IMR-90 (cell line): ENCODE measurements at regions of chr4 and their contacts with region 1.

Region 1: DNA sequence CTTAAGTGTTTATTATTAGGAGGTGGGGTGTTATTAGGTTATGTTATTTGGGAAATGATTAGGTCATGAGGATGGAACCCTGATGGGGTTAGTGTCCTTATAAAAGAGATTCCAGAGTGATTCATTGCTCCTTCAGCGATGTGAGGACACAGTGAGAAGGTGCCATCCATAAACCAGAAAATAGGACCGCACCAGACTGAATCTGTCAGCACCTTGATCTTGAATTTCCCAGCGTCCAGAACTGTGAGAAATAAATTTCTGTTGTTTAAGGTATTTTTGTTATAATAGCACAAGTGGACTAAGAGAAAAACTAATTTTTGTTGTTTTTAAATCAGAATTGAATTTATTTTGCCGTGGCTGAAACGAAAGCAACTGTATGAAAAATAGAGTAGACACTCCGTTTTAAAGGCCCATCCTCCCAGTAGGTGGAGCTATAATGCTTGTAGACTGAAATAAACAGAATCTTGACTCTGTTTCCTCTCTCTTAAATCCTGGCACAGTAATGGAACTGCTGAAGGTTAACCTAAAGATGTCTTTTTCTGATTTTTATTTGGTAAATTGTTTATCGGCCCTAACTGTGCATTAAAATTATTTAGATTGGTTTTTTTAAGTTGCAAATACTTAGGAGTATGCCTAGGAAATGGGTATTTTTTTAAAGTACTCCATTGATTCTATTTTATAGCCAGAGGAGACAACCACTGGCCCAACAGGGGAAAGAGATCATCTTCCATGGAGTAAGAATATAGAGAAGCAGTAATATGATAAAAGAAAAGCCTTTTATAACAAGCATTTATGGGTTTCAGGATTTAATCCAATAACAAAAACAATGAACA is 133.2 kb upstream of the ADAMTS3 start:
- DNase-seq: peak; percentile 49
- ATAC-seq: peak; percentile 87
- H3K4me3 ChIP-seq: peak overlapping the region; percentile 45
- H3K27ac ChIP-seq: no peak overlapping the region
- H3K4me1 ChIP-seq: no peaks in the 10 kb centered on the region
- H3K27me3 ChIP-seq: no peaks in the 10 kb centered on the region
- CTCF ChIP-seq: peak; percentile 72
- POLR2A ChIP-seq: no peak
- RAD21 ChIP-seq: peak; percentile 62

Region 2: DNA sequence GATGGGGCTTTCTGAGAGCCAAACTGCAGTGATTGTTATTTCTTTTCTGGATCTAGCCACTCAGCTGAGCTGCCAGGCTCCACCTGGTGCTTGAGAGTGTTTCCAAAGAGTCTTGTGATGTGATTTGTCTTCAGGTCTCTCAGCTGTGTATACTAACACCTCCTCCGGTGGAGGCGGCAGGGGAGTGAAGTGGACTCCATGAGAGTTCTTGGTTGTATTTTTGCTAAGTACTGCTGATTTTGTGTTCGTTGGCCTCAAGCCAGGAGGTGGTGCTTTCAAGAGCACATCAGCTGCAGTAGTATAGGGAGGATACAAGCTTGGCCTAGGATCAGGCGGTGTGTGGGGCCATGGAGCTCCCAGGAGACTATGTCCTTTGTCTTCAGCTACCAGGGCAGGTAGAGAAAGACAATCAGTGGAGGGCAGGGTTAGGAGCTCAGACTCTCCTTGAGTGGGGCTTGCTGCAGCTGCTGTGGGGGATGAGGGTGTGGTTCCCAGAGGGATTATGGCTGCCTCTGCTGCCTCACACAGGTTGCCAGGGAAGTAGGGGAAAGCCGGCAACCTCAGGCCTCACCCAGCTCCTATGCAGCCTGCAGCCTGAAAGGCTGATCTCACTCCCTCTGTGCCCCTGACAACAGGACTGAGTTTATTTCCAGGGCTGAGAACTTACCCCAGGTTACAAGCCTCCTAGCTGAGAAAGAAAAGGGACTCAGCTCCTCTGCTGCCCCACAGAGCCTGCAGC is 608.0 kb before region 1 on chr4:
- CTCF ChIA-PET with region 1: no interaction called
- POLR2A ChIA-PET with region 1: no interaction called
- dilution Hi-C with region 1: no loop called
- in situ Hi-C with region 1: no loop called
- intact Hi-C with region 1: no loop called
- DNase-seq: no peak
- ATAC-seq: no peak
- H3K4me3 ChIP-seq: no peak overlapping the region
- H3K27ac ChIP-seq: no peak overlapping the region
- H3K4me1 ChIP-seq: no peaks in the 10 kb centered on the region
- H3K27me3 ChIP-seq: no peaks in the 10 kb centered on the region
- CTCF ChIP-seq: no peak
- POLR2A ChIP-seq: no peak
- RAD21 ChIP-seq: no peak

Region 3: DNA sequence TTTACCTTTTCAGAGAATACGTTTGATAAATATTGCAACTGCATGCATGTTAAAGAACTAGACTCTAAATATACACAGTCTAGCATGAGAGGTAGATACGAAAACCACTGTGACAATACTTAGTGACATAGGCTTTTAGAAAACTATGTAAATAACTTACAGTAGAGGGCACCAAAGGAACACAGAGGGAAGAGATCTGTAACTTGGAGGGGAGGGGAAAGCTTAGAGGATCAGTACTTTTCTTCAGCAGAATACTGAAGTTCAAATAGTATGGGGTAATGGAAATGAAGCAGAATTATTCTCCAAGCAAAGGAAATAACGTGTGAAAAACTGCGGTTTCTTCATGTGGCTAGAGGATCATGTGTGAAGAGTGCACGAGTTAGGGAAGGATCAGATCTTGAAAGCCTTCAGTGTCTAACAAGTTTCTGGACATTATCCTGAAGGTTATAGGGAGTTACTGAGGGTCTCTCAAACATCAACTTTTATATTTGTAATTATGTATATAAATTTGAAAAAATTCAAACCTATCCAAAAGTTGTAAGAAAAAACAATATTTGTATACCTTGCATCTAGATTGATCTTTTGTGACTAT is 406.1 kb before region 1 on chr4:
- CTCF ChIA-PET with region 1: no interaction called
- POLR2A ChIA-PET with region 1: no interaction called
- dilution Hi-C with region 1: no loop called
- in situ Hi-C with region 1: no loop called
- intact Hi-C with region 1: loop called (anchors 2 kb)
- DNase-seq: peak; percentile 57
- ATAC-seq: peak; percentile 98
- H3K4me3 ChIP-seq: no peak overlapping the region
- H3K27ac ChIP-seq: no peak overlapping the region
- H3K4me1 ChIP-seq: no peaks in the 10 kb centered on the region
- H3K27me3 ChIP-seq: no peaks in the 10 kb centered on the region
- CTCF ChIP-seq: peak; percentile 75
- POLR2A ChIP-seq: no peak
- RAD21 ChIP-seq: peak; percentile 78

Region 4: GRCh38 chr4:72505314-72505744 is 196.9 kb before region 1 on chr4:
- CTCF ChIA-PET with region 1: interaction called, 3 read pairs
- POLR2A ChIA-PET with region 1: no interaction called
- dilution Hi-C with region 1: no loop called
- in situ Hi-C with region 1: no loop called
- intact Hi-C with region 1: loop called (anchors 2 kb)
- DNase-seq: peak; percentile 58
- ATAC-seq: peak; percentile 98
- H3K4me3 ChIP-seq: no peak overlapping the region
- H3K27ac ChIP-seq: no peak overlapping the region
- H3K4me1 ChIP-seq: no peaks in the 10 kb centered on the region
- H3K27me3 ChIP-seq: no peaks in the 10 kb centered on the region; the same call in 1 of the 2 replicates
- CTCF ChIP-seq: peak; percentile 78
- POLR2A ChIP-seq: no peak
- RAD21 ChIP-seq: peak; percentile 79

Region 5: DNA sequence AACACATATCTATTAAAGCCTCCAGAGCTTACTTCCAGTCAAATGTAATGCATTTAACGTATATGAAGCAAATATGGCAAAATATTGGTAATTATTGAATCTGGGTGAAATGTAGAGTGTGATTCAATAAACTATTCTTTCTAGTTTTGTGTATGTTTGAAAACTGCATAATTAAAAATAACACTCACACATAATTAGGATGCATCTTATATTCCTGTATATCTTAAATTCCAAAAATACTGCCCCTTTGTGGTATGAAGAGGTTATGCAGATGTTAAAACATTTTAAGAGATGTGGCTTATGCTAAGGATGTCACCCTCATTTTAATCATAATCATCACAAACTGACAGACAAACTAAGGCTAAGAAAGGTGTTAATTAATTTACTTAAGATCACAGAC is 184.4 kb after region 1 on chr4:
- CTCF ChIA-PET with region 1: no interaction called
- POLR2A ChIA-PET with region 1: no interaction called
- dilution Hi-C with region 1: no loop called
- in situ Hi-C with region 1: no loop called
- intact Hi-C with region 1: loop called (anchors 5 kb)
- DNase-seq: no peak
- ATAC-seq: 0 out of 2 replicates have a peak, but pooled peaks have one; percentile 40
- H3K4me3 ChIP-seq: no peak overlapping the region
- H3K27ac ChIP-seq: no peak overlapping the region
- H3K4me1 ChIP-seq: no peaks in the 10 kb centered on the region
- H3K27me3 ChIP-seq: no peaks in the 10 kb centered on the region
- CTCF ChIP-seq: peak; percentile 39
- POLR2A ChIP-seq: no peak
- RAD21 ChIP-seq: no peak

Region 6: DNA sequence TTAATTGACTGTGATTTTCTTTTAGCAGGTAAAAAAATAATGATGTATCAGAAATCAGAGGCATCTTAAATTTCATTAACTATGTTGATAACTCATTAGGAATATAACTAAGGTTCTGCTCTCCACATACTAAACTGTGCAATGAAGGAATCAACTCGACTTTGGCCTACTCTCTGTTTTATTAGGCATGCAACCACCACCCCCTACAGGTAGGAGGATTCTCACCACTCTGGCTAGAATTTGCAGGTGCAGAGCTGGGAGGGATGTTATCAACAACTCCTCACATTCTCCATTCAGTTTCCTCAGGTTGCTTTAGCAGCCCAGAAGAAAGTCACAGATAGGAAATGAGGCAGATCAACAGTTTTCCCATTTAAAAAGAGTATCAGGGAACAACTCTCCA is 207.3 kb after region 1 on chr4:
- CTCF ChIA-PET with region 1: no interaction called
- POLR2A ChIA-PET with region 1: no interaction called
- dilution Hi-C with region 1: no loop called
- in situ Hi-C with region 1: no loop called
- intact Hi-C with region 1: loop called (anchors 5 kb)
- DNase-seq: no peak
- ATAC-seq: no peak
- H3K4me3 ChIP-seq: no peak overlapping the region
- H3K27ac ChIP-seq: no peak overlapping the region
- H3K4me1 ChIP-seq: no peaks in the 10 kb centered on the region
- H3K27me3 ChIP-seq: no peaks in the 10 kb centered on the region
- CTCF ChIP-seq: 0 out of 2 replicates have a peak, but pooled peaks have one; percentile 10
- POLR2A ChIP-seq: no peak
- RAD21 ChIP-seq: 0 out of 2 replicates have a peak, but pooled peaks have one; percentile 6

Region 7: GRCh38 chr4:73019462-73020047 is 317.4 kb after region 1 on chr4:
- CTCF ChIA-PET with region 1: no interaction called
- POLR2A ChIA-PET with region 1: no interaction called
- dilution Hi-C with region 1: no loop called
- in situ Hi-C with region 1: loop called (anchors 5 kb)
- intact Hi-C with region 1: loop called (anchors 1 kb)
- DNase-seq: peak; percentile 47
- ATAC-seq: peak; percentile 27; the same call in 1 of the 2 replicates
- H3K4me3 ChIP-seq: no peak overlapping the region
- H3K27ac ChIP-seq: no peak overlapping the region
- H3K4me1 ChIP-seq: no peaks in the 10 kb centered on the region
- H3K27me3 ChIP-seq: no peaks in the 10 kb centered on the region; the same call in 1 of the 2 replicates
- CTCF ChIP-seq: peak; percentile 83
- POLR2A ChIP-seq: no peak
- RAD21 ChIP-seq: peak; percentile 80